AG04450 (cell line): ENCODE measurements at regions of chr3 and their contacts with region 1.

Region 1: DNA sequence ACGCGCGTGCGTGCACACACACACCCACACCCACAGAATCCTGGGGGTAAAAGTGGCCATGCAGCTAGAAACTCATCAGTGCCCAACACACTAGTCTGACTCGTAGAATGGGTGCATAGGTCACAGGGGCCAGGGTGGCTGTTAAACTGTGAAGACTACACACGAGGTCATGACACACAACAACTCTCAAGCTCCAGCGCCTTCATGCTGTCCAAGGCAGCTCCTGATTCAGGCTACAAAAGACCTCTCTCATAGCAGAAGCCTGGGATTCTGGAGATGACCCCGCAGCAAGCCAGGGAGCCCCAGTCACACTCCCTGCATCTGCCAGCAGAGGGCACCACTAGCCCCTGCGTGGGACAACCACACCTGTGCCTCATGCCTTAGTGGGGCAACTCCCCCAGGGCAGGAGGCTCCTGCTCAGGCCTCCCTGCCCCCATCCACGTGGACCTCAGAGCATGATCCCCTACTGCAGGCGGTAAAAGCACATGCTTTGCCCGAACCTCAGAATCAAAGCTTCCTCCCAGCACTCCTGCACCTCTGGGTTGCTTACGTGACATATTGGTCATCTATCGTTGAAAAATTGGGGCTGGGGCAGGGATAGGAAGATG is 93.1 kb downstream of the LRIG1 start:
- DNase-seq: no peak
- H3K4me3 ChIP-seq: no peak overlapping the region
- H3K27ac ChIP-seq: no peak overlapping the region
- H3K27me3 ChIP-seq: no peaks in the 10 kb centered on the region
- CTCF ChIP-seq: peak; percentile 82

Region 2: GRCh38 chr3:66270701-66271100 is 137.0 kb before region 1 on chr3:
- CTCF ChIA-PET with region 1: interaction called, 11 read pairs
- POLR2A ChIA-PET with region 1: no interaction called
- DNase-seq: peak; percentile 53
- H3K4me3 ChIP-seq: no peak overlapping the region
- H3K27ac ChIP-seq: no peak overlapping the region
- H3K27me3 ChIP-seq: no peaks in the 10 kb centered on the region
- CTCF ChIP-seq: peak; percentile 16; the same call in 1 of the 2 replicates

Region 3: DNA sequence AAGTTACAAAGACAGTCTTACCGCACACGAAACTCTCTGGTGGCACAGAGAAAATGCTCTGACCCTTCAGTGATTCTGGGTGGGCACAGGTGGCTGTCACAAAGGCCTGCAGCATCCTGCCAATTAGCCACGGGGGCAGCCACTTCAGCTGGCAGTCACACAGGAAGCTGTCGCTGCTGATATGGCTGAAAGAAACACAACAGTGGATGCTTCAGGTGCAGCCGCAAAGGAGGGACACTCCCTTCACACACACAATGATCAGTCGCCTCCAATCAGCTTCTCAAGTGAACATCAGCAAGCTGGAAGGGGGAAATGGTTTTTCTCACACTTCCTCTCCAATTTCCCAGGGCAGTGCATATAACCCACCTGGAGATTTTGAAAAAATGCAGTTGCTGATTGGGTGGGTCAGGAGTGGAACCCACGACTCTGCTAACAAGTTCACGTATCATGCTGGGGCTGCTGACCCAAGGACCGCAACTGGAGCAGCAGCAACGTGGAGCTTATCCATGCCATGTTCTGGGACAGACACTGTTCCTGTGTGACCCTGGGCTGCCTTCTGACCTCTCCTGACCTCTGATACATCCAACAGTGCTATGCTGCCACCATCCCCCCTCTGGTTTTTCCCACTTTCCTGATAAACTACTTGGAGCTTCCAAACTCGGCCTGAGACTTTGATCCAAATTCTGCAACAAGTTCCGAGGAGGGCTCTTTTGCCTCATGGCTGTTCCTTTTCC is 13.5 kb before region 1 on chr3:
- CTCF ChIA-PET with region 1: interaction called, 16 read pairs
- POLR2A ChIA-PET with region 1: no interaction called
- DNase-seq: no peak
- H3K4me3 ChIP-seq: no peak overlapping the region
- H3K27ac ChIP-seq: peak overlapping the region; percentile 31
- H3K27me3 ChIP-seq: no peaks in the 10 kb centered on the region
- CTCF ChIP-seq: no peak

Region 4: DNA sequence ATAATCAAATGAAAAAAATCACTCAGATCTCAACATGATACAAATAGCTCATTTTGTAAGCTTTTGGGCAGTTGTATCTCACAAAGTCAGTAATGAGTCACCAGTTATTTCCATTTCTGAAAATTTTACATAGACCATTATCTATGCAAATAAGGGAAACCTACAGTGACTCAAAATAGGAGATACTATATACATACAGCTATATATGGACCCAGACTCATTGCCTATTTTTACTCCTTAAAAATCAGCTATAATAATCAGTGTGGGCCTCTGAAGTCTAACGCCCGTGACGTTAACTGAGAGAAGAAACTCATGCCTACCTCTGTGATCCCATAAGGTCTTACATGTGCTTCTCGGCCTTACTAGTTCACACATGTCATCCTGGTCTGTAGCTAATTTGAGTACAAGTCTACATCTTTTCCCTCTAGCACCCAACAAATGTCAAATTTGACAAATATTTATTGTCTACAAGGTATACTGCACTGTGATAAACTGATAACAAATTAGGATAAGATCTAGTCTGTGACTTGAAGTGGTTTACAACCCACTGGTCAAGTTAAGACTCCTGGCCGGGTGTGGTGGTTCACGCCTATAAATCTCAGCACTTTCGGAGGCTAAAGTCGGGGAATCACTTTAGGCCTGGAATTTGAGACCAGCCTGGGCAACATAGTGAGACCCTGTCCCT is 61.6 kb after region 1 on chr3:
- CTCF ChIA-PET with region 1: interaction called, 22 read pairs
- POLR2A ChIA-PET with region 1: no interaction called
- DNase-seq: no peak
- H3K4me3 ChIP-seq: no peak overlapping the region
- H3K27ac ChIP-seq: no peak overlapping the region
- H3K27me3 ChIP-seq: no peaks in the 10 kb centered on the region
- CTCF ChIP-seq: no peak

Region 5: GRCh38 chr3:66816090-66816761 is 408.5 kb after region 1 on chr3:
- CTCF ChIA-PET with region 1: interaction called, 68 read pairs
- POLR2A ChIA-PET with region 1: no interaction called
- DNase-seq: peak; percentile 47
- H3K4me3 ChIP-seq: no peak overlapping the region
- H3K27ac ChIP-seq: no peak overlapping the region
- H3K27me3 ChIP-seq: no peaks in the 10 kb centered on the region
- CTCF ChIP-seq: peak; percentile 69